CD4-positive, alpha-beta T cell (primary cell): ENCODE measurements at regions of chr20 and their contacts with region 1.

Region 1: DNA sequence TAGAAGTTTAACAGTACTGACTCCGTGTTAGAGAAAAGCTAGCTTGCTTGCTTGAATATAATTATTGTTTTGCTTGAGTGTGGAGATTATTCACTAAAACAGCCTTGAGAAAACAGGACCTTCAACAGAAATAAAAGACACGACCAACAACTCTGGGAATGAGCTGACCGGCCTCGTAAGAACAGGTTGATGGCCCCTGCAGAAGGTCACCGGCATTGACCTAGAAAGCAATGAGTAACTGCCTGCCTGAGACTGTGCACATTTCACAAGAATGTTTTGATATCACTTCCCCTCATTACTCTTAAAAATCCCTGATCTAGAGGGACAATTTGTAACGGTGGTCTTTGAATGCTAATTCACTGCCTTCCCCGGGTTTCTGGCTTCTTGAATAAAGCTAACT is 49.4 kb downstream of the SEL1L2 start:
- DNase-seq: no peak
- ATAC-seq: no peak
- H3K4me3 ChIP-seq: no peak overlapping the region
- H3K4me3 Mint-ChIP-seq: no peak overlapping the region
- H3K27ac ChIP-seq: no peak overlapping the region
- H3K27ac Mint-ChIP-seq: no peak overlapping the region
- H3K4me1 ChIP-seq: no peaks in the 10 kb centered on the region
- H3K4me1 Mint-ChIP-seq: no peaks in the 10 kb centered on the region
- H3K27me3 ChIP-seq: no peaks in the 10 kb centered on the region
- H3K27me3 Mint-ChIP-seq: no peaks in the 10 kb centered on the region
- CTCF ChIP-seq: no peak

Region 2: GRCh38 chr20:13873831-13874230 is 67.2 kb before region 1 on chr20:
- CTCF ChIA-PET with region 1: no interaction called
- POLR2A ChIA-PET with region 1: no interaction called
- intact Hi-C with region 1: loop called in 1 of 2 experiments (anchors 2 kb)
- DNase-seq: no peak
- ATAC-seq: no peak
- H3K4me3 ChIP-seq: no peak overlapping the region
- H3K4me3 Mint-ChIP-seq: no peak overlapping the region
- H3K27ac ChIP-seq: no peak overlapping the region
- H3K27ac Mint-ChIP-seq: no peak overlapping the region
- H3K4me1 ChIP-seq: no peaks in the 10 kb centered on the region
- H3K4me1 Mint-ChIP-seq: no peaks in the 10 kb centered on the region
- H3K27me3 ChIP-seq: no peaks in the 10 kb centered on the region
- H3K27me3 Mint-ChIP-seq: peaks cover 12% of the 10 kb centered on the region
- CTCF ChIP-seq: no peak

Region 3: DNA sequence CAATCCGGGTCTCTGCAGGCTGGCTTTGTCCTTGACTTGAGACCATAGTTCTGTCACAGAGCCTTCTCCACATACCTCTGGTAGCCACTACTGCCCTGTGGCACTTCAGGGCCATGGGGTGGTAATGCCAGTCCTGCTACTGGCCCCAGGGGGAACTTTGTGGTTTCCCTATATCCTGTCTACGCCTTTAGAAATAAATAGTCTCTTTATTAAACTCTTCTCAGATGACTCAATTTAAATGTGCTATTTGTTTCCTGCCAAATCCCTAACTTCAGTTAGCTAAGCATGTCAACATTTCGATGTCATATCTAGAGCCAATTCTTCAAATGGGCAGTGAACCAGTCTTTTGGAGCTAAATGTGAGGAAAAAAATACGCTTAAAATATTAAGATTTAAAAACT is 10.8 kb before region 1 on chr20:
- CTCF ChIA-PET with region 1: no interaction called
- POLR2A ChIA-PET with region 1: no interaction called
- intact Hi-C with region 1: no loop called
- DNase-seq: no peak
- ATAC-seq: no peak
- H3K4me3 ChIP-seq: no peak overlapping the region
- H3K4me3 Mint-ChIP-seq: no peak overlapping the region
- H3K27ac ChIP-seq: no peak overlapping the region
- H3K27ac Mint-ChIP-seq: no peak overlapping the region
- H3K4me1 ChIP-seq: no peaks in the 10 kb centered on the region
- H3K4me1 Mint-ChIP-seq: no peaks in the 10 kb centered on the region
- H3K27me3 ChIP-seq: no peaks in the 10 kb centered on the region
- H3K27me3 Mint-ChIP-seq: no peaks in the 10 kb centered on the region
- CTCF ChIP-seq: no peak

Region 4: DNA sequence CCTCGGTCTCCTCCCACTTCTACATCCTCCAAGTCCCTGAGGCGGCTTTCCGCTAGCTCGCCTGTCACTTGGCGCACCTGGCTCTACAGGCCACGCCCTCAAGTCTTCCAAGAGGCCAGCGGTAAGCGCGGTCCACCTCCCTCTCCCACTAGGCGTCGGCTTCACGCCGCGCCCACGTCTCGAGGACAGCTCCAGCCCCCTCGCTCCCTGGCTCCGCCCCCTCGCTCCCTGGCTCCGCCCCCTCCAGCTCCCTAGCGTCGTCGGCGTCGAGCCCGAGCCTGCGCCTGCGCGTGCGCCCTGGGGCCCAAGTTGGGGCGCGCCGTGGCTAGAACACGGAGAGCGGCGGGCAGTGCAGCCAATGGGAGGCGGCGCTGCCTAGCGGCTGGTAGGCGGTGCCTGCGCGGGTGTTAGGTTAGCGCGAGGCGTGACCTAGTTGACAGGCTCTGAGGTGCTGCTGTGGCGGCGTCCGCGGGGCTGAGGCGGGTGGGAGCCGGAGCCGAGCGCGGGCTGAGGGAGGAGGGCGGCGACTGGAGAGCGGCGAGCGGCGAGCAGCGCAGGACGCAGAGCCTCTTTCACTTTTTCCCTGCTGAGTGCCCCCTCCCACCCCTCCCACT is 54.2 kb after region 1 on chr20 and contains the start of gene MACROD2:
- CTCF ChIA-PET with region 1: no interaction called
- POLR2A ChIA-PET with region 1: no interaction called
- intact Hi-C with region 1: no loop called
- DNase-seq: peak in 7 of 14 experiments; percentile 5 to 49 (median 23)
- ATAC-seq: no peak
- H3K4me3 ChIP-seq: no peak within 1 kb of the TSS
- H3K4me3 Mint-ChIP-seq: no peak within 1 kb of the TSS
- H3K27ac ChIP-seq: no peak within 1 kb of the TSS
- H3K27ac Mint-ChIP-seq: no peak within 1 kb of the TSS
- H3K4me1 ChIP-seq: peaks cover 4% of the 10 kb centered on the region
- H3K4me1 Mint-ChIP-seq: peaks cover 7% of the 10 kb centered on the region
- H3K27me3 ChIP-seq: peaks cover 3 to 11% of the 10 kb centered on the region in 2 experiments
- H3K27me3 Mint-ChIP-seq: peaks cover 32% of the 10 kb centered on the region
- CTCF ChIP-seq: no peak
- total RNA-seq, gene MACROD2: not detected

Region 5: GRCh38 chr20:14012671-14013070 is 71.6 kb after region 1 on chr20:
- CTCF ChIA-PET with region 1: no interaction called
- POLR2A ChIA-PET with region 1: no interaction called
- intact Hi-C with region 1: no loop called
- DNase-seq: no peak
- ATAC-seq: no peak
- H3K4me3 ChIP-seq: no peak overlapping the region
- H3K4me3 Mint-ChIP-seq: no peak overlapping the region
- H3K27ac ChIP-seq: no peak overlapping the region
- H3K27ac Mint-ChIP-seq: no peak overlapping the region
- H3K4me1 ChIP-seq: no peaks in the 10 kb centered on the region
- H3K4me1 Mint-ChIP-seq: no peaks in the 10 kb centered on the region
- H3K27me3 ChIP-seq: no peaks in the 10 kb centered on the region
- H3K27me3 Mint-ChIP-seq: no peaks in the 10 kb centered on the region
- CTCF ChIP-seq: no peak

Region 6: DNA sequence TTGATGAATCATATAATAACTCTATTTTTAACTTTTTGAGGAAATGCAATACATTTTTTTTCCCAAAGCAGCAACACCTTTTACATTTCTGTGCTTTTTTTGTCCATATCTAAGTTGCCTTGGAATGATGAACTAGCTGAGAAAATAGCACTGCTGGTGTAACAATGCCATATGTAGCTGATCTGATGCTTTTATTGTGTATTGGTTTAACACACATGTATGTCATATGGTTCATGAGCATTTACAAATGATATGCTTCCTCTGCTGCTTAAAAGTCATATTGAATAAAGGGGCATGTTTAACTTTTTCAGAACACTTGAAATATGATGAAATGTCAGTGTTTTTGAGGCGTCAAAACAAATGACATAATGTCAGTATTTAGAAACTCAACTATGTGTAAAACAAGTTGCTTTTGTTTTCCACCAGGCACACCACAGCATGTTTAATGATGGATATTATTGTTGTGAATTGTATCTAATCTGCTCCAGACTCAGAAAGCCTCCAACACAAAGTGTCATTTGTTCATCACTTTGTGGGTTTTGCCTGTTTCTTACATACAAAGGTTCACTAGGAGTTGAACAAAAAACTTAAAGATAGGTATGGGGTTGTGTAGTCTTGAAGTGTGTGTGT is 1172.2 kb after region 1 on chr20:
- CTCF ChIA-PET with region 1: no interaction called
- POLR2A ChIA-PET with region 1: no interaction called
- intact Hi-C with region 1: no loop called
- DNase-seq: no peak
- ATAC-seq: no peak
- H3K4me3 ChIP-seq: no peak overlapping the region
- H3K4me3 Mint-ChIP-seq: no peak overlapping the region
- H3K27ac ChIP-seq: no peak overlapping the region
- H3K27ac Mint-ChIP-seq: no peak overlapping the region
- H3K4me1 ChIP-seq: no peaks in the 10 kb centered on the region
- H3K4me1 Mint-ChIP-seq: no peaks in the 10 kb centered on the region
- H3K27me3 ChIP-seq: no peaks in the 10 kb centered on the region
- H3K27me3 Mint-ChIP-seq: no peaks in the 10 kb centered on the region
- CTCF ChIP-seq: no peak